ENCODE measurements at regions of chr12 and their contacts with region 1.

Region 1: GRCh38 chr12:119444456-119445044 is 110.0 kb downstream of the CCDC60 start:
- DNase-seq: peak; percentile 21 to 59
- ATAC-seq: peak; percentile 48 to 71 (median 50)
- H3K4me3 ChIP-seq: no peak overlapping the region
- H3K4me3 Mint-ChIP-seq: no peak overlapping the region
- H3K27ac ChIP-seq: no peak overlapping the region
- H3K27ac Mint-ChIP-seq: no peak overlapping the region
- H3K4me1 ChIP-seq: no peaks in the 10 kb centered on the region
- H3K4me1 Mint-ChIP-seq: peaks cover 0 to 5% of the 10 kb centered on the region in 2 donors
- H3K27me3 ChIP-seq: no peaks in the 10 kb centered on the region
- H3K27me3 Mint-ChIP-seq: peaks cover 8 to 11% of the 10 kb centered on the region in 2 donors
- CTCF ChIP-seq: peak; percentile 75

Region 2: DNA sequence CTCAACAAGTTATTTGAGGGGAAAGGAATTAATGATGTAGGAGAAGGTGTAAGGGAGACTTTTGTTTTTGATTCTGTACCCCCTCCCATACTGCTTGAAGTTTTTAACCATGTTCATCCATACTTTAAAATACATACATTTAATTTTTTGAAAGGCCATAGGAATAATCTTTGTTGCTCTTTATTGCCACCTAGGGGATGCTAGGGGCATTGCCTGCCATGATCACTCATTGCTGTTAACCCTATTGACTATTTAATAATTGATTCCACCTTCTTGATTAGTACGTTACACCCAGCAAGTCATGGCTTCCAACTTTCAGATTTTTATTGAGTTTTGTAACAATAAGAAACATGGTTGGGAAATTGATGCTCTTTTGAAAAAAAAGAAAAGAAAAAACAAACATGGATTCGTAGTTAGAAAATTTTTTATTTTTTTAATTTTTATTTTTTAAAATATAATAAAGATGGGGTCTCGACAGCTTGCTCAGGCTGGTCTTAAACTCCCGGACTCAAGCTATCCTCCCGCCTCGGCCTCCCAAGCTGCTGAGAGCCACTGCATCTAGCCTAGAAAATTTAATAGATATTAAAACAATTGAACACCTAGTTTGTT is 214.8 kb after region 1 on chr12:
- intact Hi-C with region 1: loop called (anchors 5 kb)
- DNase-seq: peak; percentile 25 to 74
- ATAC-seq: peak; percentile 64 to 85 (median 82)
- H3K4me3 ChIP-seq: no peak overlapping the region
- H3K4me3 Mint-ChIP-seq: no peak overlapping the region
- H3K27ac ChIP-seq: no peak overlapping the region
- H3K27ac Mint-ChIP-seq: peak overlapping the region; percentile 68 to 75
- H3K4me1 ChIP-seq: no peaks in the 10 kb centered on the region
- H3K4me1 Mint-ChIP-seq: peaks cover 8 to 10% of the 10 kb centered on the region in 2 donors
- H3K27me3 ChIP-seq: no peaks in the 10 kb centered on the region
- H3K27me3 Mint-ChIP-seq: peaks cover 0 to 4% of the 10 kb centered on the region in 2 donors
- CTCF ChIP-seq: peak; percentile 98